ENCODE measurements at regions of chr19 and their contacts with region 1.

Region 1: DNA sequence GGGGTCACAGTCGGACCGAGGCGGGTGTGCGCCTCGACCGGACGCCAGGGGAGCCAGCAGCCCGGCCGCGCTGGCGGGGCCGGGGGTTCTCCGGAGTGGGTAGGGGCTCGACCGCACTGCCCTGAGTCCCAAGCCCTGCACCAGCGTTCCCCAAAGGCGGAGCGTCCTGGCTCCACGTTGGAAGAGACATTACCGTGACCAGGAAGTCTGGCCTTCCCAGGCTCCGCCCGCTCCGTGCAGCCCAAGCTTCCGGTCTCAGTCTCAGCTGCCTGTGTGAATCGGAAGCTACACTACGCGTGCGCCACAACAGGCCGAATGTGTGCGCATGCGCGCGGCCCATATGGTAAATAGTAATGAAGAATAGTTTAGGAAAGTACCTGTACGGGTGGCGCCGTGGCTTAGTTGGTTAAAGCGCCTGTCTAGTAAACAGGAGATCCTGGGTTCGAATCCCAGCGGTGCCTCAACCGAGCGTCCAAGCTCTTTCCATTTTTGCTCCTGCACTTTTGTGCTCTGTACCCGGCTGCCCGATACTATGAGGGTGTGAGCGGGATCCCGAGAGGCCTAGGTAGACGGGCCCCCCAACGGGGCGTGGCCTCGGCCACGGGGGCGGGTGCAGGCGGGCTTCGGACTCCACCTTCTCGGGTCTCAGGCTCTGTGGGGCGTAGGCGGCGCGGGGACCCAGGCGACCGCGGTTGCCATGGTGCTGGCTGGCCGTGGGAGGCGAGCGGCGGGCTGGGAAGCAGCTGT is 17.3 kb upstream of the LRP3 start:
- DNase-seq: peak; percentile 96
- H3K4me3 Mint-ChIP-seq: peak overlapping the region; percentile 98
- H3K27ac Mint-ChIP-seq: peak overlapping the region; percentile 95
- H3K4me1 Mint-ChIP-seq: peaks cover 29% of the 10 kb centered on the region
- H3K27me3 Mint-ChIP-seq: peaks cover 2% of the 10 kb centered on the region

Region 2: GRCh38 chr19:32971715-32972540 is 204.9 kb before region 1 on chr19 and contains the starts of genes CEP89 and FAAP24:
- CTCF ChIA-PET with region 1: interaction called, 3 read pairs
- intact Hi-C with region 1: loop called (anchors 1 kb)
- DNase-seq: peak; percentile 99
- H3K4me3 Mint-ChIP-seq: peak within 1 kb of the TSS; percentile 97
- H3K27ac Mint-ChIP-seq: peak within 1 kb of the TSS; percentile 90
- H3K4me1 Mint-ChIP-seq: peaks cover 9% of the 10 kb centered on the region
- H3K27me3 Mint-ChIP-seq: no peaks in the 10 kb centered on the region
- total RNA-seq, gene CEP89: 14.6 to 15.5 TPM
- total RNA-seq, gene FAAP24: 9.6 to 10.5 TPM

Region 3: DNA sequence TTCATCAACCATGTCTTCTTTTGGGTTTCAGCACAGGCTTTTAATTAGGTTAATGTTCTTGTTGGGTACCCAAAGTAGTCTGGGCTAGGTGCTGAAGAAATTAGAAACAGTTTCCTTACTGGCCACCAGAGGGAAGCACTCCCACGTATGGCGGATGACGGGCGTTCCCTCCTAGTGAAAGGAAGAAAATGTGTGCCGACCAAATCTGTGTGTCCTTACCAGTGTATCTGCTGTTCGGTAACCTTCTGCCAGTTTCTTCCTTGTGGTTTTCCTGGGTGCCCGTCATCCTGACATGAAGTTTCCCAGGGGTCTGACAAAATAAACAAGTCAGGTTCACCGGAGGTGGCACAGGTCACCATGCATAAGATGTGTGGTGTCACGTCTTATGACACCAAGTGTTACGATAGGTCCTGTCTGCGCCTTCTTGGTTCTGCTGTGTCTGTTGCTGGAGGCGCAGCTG is 50.9 kb before region 1 on chr19:
- CTCF ChIA-PET with region 1: interaction called, 5 read pairs
- intact Hi-C with region 1: loop called (anchors 2 kb)
- DNase-seq: peak; percentile 69
- H3K4me3 Mint-ChIP-seq: no peak overlapping the region
- H3K27ac Mint-ChIP-seq: no peak overlapping the region
- H3K4me1 Mint-ChIP-seq: peaks cover 3% of the 10 kb centered on the region
- H3K27me3 Mint-ChIP-seq: no peaks in the 10 kb centered on the region

Region 4: GRCh38 chr19:33161201-33161600 is 15.6 kb before region 1 on chr19:
- CTCF ChIA-PET with region 1: interaction called, 13 read pairs
- intact Hi-C with region 1: loop called (anchors 1 kb)
- DNase-seq: no peak
- H3K4me3 Mint-ChIP-seq: no peak overlapping the region
- H3K27ac Mint-ChIP-seq: peak overlapping the region; percentile 50
- H3K4me1 Mint-ChIP-seq: peaks cover 27% of the 10 kb centered on the region
- H3K27me3 Mint-ChIP-seq: no peaks in the 10 kb centered on the region

Region 5: GRCh38 chr19:33373701-33374421 is 197.0 kb after region 1 on chr19 and contains the start of gene CEBPG:
- CTCF ChIA-PET with region 1: interaction called, 3 read pairs
- intact Hi-C with region 1: loop called (anchors 1 kb)
- DNase-seq: peak; percentile 67
- H3K4me3 Mint-ChIP-seq: peak within 1 kb of the TSS; percentile 88
- H3K27ac Mint-ChIP-seq: peak within 1 kb of the TSS; percentile 83
- H3K4me1 Mint-ChIP-seq: peaks cover 51% of the 10 kb centered on the region
- H3K27me3 Mint-ChIP-seq: no peaks in the 10 kb centered on the region
- total RNA-seq, gene CEBPG: 37.3 to 38.7 TPM